B cell (primary cell): ENCODE measurements at regions of chr17 and their contacts with region 1.

Region 1: GRCh38 chr17:76264755-76265596 is at the start of gene UBALD2:
- DNase-seq: peak; percentile 99
- ATAC-seq: peak; percentile 80
- H3K4me3 ChIP-seq: peak within 1 kb of the TSS; percentile 61 to 91 (median 88)
- H3K4me3 Mint-ChIP-seq: peak within 1 kb of the TSS; percentile 94
- H3K27ac ChIP-seq: peak within 1 kb of the TSS; percentile 77 to 94
- H3K27ac Mint-ChIP-seq: peak within 1 kb of the TSS; percentile 96
- H3K4me1 ChIP-seq: peaks cover 82 to 87% of the 10 kb centered on the region in 2 donors
- H3K4me1 Mint-ChIP-seq: peaks cover 74% of the 10 kb centered on the region
- H3K27me3 ChIP-seq: no peaks in the 10 kb centered on the region
- H3K27me3 Mint-ChIP-seq: no peaks in the 10 kb centered on the region
- CTCF ChIP-seq: no peak
- total RNA-seq, gene UBALD2: 78.9 and 84.8 TPM in 2 replicates

Region 2: GRCh38 chr17:75182569-75183450 is 1082.2 kb before region 1 on chr17 and contains the start of gene SUMO2:
- CTCF ChIA-PET with region 1: no interaction called
- POLR2A ChIA-PET with region 1: no interaction called
- intact Hi-C with region 1: loop called (anchors 5 kb)
- DNase-seq: peak; percentile 99
- ATAC-seq: peak; percentile 82
- H3K4me3 ChIP-seq: peak within 1 kb of the TSS; percentile 80 to 93 (median 87)
- H3K4me3 Mint-ChIP-seq: peak within 1 kb of the TSS; percentile 90
- H3K27ac ChIP-seq: peak within 1 kb of the TSS; percentile 94 to 96
- H3K27ac Mint-ChIP-seq: peak within 1 kb of the TSS; percentile 99
- H3K4me1 ChIP-seq: peaks cover 15 to 21% of the 10 kb centered on the region in 2 donors
- H3K4me1 Mint-ChIP-seq: peaks cover 26% of the 10 kb centered on the region
- H3K27me3 ChIP-seq: no peaks in the 10 kb centered on the region
- H3K27me3 Mint-ChIP-seq: no peaks in the 10 kb centered on the region
- CTCF ChIP-seq: no peak
- total RNA-seq, gene SUMO2: 229 and 234 TPM in 2 replicates

Region 3: GRCh38 chr17:75904749-75905521 is 360.0 kb before region 1 on chr17 and contains the start of gene MRPL38:
- CTCF ChIA-PET with region 1: interaction called, 3 read pairs
- POLR2A ChIA-PET with region 1: no interaction called
- intact Hi-C with region 1: loop called (anchors 10 kb)
- DNase-seq: peak; percentile 97
- ATAC-seq: peak; percentile 96
- H3K4me3 ChIP-seq: peak within 1 kb of the TSS; percentile 40 to 83 (median 79)
- H3K4me3 Mint-ChIP-seq: peak within 1 kb of the TSS; percentile 91
- H3K27ac ChIP-seq: peak within 1 kb of the TSS; percentile 79 to 83
- H3K27ac Mint-ChIP-seq: peak within 1 kb of the TSS; percentile 90
- H3K4me1 ChIP-seq: peaks cover 3 to 17% of the 10 kb centered on the region in 2 donors
- H3K4me1 Mint-ChIP-seq: peaks cover 8% of the 10 kb centered on the region
- H3K27me3 ChIP-seq: no peaks in the 10 kb centered on the region
- H3K27me3 Mint-ChIP-seq: no peaks in the 10 kb centered on the region
- CTCF ChIP-seq: peak; percentile 99
- total RNA-seq, gene MRPL38: 127 and 139 TPM in 2 replicates

Region 4: GRCh38 chr17:76153640-76154039 is 111.3 kb before region 1 on chr17:
- CTCF ChIA-PET with region 1: no interaction called
- POLR2A ChIA-PET with region 1: no interaction called
- intact Hi-C with region 1: no loop called
- DNase-seq: no peak
- ATAC-seq: no peak
- H3K4me3 ChIP-seq: no peak overlapping the region
- H3K4me3 Mint-ChIP-seq: no peak overlapping the region
- H3K27ac ChIP-seq: no peak overlapping the region
- H3K27ac Mint-ChIP-seq: no peak overlapping the region
- H3K4me1 ChIP-seq: no peaks in the 10 kb centered on the region
- H3K4me1 Mint-ChIP-seq: no peaks in the 10 kb centered on the region
- H3K27me3 ChIP-seq: no peaks in the 10 kb centered on the region
- H3K27me3 Mint-ChIP-seq: peaks cover 12% of the 10 kb centered on the region
- CTCF ChIP-seq: no peak

Region 5: DNA sequence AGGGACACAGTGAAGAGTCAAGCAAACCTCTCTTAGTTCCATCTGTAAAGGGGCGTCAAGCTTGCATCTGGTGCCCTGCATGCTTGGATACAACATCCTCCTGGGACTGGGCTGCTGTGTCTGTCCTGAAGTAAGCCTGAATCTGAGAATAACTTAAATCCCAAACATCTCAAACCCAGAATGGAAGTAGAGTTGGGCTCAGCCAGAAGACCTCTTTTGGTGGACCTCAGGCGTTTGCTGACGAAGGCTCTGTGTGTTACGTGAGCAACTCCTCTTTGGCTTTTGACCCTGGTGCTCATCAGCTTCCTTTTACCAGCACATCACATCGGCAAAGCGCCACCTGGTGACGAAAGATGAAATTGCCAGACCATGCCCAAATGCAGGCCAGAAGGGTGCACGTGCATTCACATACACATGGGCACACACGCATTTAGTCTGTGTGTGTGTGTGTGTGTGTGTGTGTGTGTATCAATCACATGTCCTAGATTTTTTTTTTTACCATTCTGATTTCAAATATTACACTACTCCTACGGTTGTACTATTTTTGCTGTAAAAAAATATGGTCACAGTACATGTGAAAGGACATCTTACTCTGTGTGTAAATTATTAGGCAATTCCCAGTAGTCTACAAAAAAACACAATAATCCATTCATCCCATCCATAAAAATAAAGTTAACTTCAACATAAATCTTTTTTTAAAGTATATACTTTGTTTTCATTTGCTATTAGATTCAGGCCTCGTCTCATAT is 82.8 kb before region 1 on chr17:
- CTCF ChIA-PET with region 1: interaction called, 22 read pairs
- POLR2A ChIA-PET with region 1: interaction called, 4 read pairs
- intact Hi-C with region 1: loop called (anchors 5 kb)
- DNase-seq: peak; percentile 95
- ATAC-seq: peak; percentile 96
- H3K4me3 ChIP-seq: no peak overlapping the region
- H3K4me3 Mint-ChIP-seq: peak overlapping the region; percentile 1
- H3K27ac ChIP-seq: no peak overlapping the region
- H3K27ac Mint-ChIP-seq: peak overlapping the region; percentile 74
- H3K4me1 ChIP-seq: peaks cover 10 to 11% of the 10 kb centered on the region in 2 donors
- H3K4me1 Mint-ChIP-seq: peaks cover 20% of the 10 kb centered on the region
- H3K27me3 ChIP-seq: no peaks in the 10 kb centered on the region
- H3K27me3 Mint-ChIP-seq: no peaks in the 10 kb centered on the region
- CTCF ChIP-seq: peak; percentile 89

Region 6: DNA sequence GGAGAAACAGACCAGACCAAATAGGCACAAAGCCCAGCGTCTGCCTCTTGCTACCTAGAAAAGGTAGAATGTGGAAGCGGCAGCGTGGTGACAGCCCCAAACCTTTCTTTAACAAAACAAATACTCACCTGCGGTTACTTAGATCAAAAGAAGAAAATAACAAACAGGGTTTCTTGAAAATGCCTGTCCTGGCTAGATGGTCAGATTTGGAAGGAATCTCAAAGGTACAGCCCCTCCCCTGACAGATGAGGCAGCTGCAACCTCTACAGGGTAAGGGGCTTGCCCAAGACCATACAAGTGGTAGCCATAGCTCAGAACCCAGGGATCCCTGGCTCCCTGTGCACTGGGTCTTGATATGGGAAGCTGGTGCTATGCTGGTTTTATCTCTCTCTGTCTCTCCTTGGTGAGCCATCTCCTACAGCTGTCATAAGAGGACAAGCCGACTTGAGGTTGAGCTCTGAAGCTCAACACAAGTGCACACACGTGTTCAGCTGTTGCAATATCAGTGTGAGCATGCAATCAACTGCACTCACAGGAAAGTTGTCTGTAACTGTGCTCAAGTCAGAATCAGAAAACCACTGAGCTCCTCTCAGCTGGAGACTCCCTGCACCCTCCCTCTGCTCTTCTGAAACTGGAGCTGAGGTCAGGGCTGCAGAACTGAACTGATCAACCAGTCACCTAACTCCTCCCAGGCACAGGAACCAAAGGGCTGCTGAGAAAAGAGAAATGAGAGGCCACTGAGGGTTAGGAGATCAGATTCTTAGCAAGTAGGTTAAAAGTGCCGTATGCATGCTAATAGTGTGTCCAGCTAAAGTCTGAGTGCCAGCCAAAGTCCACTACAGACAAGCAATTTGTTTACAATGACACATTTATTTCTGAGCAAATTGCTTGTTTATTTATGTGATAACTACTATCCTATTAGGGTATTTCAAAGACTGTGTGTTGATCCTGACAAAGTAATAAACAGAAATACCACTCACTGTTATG is 18.6 kb before region 1 on chr17:
- CTCF ChIA-PET with region 1: interaction called, 15 read pairs
- POLR2A ChIA-PET with region 1: interaction called, 7 read pairs
- intact Hi-C with region 1: no loop called
- DNase-seq: peak; percentile 53
- ATAC-seq: peak; percentile 84
- H3K4me3 ChIP-seq: no peak overlapping the region
- H3K4me3 Mint-ChIP-seq: peak overlapping the region; percentile 7
- H3K27ac ChIP-seq: no peak overlapping the region
- H3K27ac Mint-ChIP-seq: peak overlapping the region; percentile 41
- H3K4me1 ChIP-seq: peaks cover 13 to 18% of the 10 kb centered on the region in 2 donors
- H3K4me1 Mint-ChIP-seq: peaks cover 16% of the 10 kb centered on the region
- H3K27me3 ChIP-seq: peaks cover 0 to 29% (median 18%) of the 10 kb centered on the region in 4 experiments
- H3K27me3 Mint-ChIP-seq: peaks cover 25% of the 10 kb centered on the region
- CTCF ChIP-seq: no peak

Region 7: DNA sequence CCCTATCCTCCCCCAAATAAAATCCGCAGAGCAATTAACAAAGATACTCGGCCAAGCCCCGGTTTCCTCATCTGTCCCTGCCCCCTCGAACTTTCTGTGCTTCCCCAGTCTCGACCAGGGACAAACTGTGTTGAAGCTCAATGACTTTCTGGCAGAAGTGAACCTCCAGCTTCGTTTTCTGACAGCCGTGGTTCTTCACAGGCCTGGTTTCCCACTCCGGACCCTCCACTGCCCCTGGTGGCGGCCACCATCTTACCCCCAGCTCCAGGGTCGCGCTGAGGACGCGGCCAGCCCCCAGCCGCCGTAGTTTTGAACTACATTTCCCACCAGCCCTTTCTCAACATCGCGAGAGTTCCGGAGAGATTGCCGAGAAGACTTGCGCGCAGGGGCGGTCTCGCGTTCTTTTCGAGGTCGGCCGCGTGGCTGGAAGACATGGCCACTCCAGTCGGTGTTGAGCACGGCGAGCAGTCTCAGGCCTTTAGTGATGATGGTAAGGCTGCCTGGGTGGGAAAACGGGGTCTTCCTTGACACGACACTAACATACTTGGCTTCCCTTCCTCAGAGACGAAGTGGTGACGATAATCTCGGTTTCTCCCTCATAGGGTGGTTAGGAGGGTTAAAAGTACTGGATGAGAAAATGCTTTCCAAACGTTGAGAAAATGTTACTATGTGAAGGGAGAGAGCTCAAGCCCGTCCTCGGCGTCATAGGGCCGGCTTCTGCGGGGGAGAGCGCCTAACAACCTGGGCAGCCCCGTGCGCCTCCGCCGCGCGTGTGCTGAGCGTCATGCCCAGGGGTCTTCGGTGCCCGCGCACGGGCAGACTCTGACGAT is 292.6 kb after region 1 on chr17:
- CTCF ChIA-PET with region 1: no interaction called
- POLR2A ChIA-PET with region 1: interaction called, 10 read pairs
- intact Hi-C with region 1: no loop called
- DNase-seq: peak; percentile 97
- ATAC-seq: peak; percentile 93
- H3K4me3 ChIP-seq: peak overlapping the region; percentile 76 to 94 (median 88)
- H3K4me3 Mint-ChIP-seq: peak overlapping the region; percentile 100
- H3K27ac ChIP-seq: peak overlapping the region; percentile 81 to 98
- H3K27ac Mint-ChIP-seq: peak overlapping the region; percentile 97
- H3K4me1 ChIP-seq: peaks cover 16 to 37% of the 10 kb centered on the region in 2 donors
- H3K4me1 Mint-ChIP-seq: peaks cover 63% of the 10 kb centered on the region
- H3K27me3 ChIP-seq: no peaks in the 10 kb centered on the region
- H3K27me3 Mint-ChIP-seq: no peaks in the 10 kb centered on the region
- CTCF ChIP-seq: peak; percentile 58